Heart right ventricle (tissue), 16 donors: ENCODE measurements at regions of chr12 and their contacts with region 1.

Region 1: DNA sequence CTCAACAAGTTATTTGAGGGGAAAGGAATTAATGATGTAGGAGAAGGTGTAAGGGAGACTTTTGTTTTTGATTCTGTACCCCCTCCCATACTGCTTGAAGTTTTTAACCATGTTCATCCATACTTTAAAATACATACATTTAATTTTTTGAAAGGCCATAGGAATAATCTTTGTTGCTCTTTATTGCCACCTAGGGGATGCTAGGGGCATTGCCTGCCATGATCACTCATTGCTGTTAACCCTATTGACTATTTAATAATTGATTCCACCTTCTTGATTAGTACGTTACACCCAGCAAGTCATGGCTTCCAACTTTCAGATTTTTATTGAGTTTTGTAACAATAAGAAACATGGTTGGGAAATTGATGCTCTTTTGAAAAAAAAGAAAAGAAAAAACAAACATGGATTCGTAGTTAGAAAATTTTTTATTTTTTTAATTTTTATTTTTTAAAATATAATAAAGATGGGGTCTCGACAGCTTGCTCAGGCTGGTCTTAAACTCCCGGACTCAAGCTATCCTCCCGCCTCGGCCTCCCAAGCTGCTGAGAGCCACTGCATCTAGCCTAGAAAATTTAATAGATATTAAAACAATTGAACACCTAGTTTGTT is 8.5 kb upstream of the PRKAB1 start:
- DNase-seq: no peak
- ATAC-seq: no peak
- H3K4me3 ChIP-seq: no peak overlapping the region
- H3K27ac ChIP-seq: no peak overlapping the region
- H3K4me1 ChIP-seq: peaks cover 0 to 11% (median 0%) of the 10 kb centered on the region in 9 donors
- H3K27me3 ChIP-seq: no peaks in the 10 kb centered on the region
- CTCF ChIP-seq: peak; percentile 68 to 95 (median 88)

Region 2: DNA sequence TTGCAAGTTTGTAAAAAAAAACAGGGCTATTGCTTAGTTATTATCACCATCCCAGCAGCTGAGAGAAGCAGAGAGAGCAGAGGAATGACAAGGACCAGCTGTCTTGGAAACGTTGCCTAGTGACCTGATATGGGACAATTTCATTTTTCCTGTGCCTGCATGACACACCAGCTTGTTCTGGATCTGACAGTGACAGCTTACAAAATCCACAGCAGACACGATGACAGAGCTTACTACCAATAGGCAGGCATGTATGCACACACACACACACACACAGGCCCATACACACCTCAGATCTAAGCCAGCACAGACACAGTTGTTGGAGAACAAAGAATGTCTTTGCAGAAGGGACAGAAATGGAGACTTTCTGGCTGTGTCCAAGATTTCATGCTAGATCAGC is 455.3 kb before region 1 on chr12:
- intact Hi-C with region 1: no loop called
- DNase-seq: peak in 1 of 2 donors; percentile 76
- ATAC-seq: peak; percentile 59 to 80 (median 76)
- H3K4me3 ChIP-seq: no peak overlapping the region
- H3K27ac ChIP-seq: peak overlapping the region in 9 of 10 donors; percentile 25 to 83 (median 71)
- H3K4me1 ChIP-seq: peaks cover 5 to 75% (median 31%) of the 10 kb centered on the region in 9 donors
- H3K27me3 ChIP-seq: no peaks in the 10 kb centered on the region
- CTCF ChIP-seq: no peak

Region 3: GRCh38 chr12:119369907-119370546 is 289.4 kb before region 1 on chr12:
- intact Hi-C with region 1: no loop called
- DNase-seq: no peak
- ATAC-seq: no peak
- H3K4me3 ChIP-seq: no peak overlapping the region
- H3K27ac ChIP-seq: no peak overlapping the region
- H3K4me1 ChIP-seq: peaks cover 0 to 38% (median 15%) of the 10 kb centered on the region in 9 donors
- H3K27me3 ChIP-seq: no peaks in the 10 kb centered on the region
- CTCF ChIP-seq: no peak

Region 4: DNA sequence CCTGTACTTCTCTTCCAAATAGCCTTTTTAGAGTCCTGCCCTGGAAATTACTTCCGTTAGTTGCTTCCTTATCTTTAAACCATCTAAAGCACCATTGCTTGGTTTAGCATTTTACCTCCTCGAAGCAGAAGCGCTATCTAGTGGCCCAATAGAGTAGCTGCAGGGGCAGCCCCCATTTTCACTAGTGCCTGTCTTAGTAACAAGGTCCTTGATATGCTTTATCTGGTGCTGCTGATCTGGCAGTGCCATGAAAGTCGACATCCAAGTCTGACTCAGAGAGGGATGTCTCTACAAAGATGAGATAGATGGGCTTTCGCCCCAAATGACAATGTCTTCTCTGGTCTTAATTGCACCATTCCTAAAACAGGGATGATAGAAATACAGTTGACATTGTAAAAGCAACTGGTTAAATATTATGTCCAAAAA is 242.7 kb after region 1 on chr12:
- intact Hi-C with region 1: loop called in 1 of 10 experiments (anchors 10 kb)
- DNase-seq: peak; percentile 16 to 19
- ATAC-seq: peak in 1 of 8 donors; percentile 50
- H3K4me3 ChIP-seq: no peak overlapping the region
- H3K27ac ChIP-seq: no peak overlapping the region
- H3K4me1 ChIP-seq: peaks cover 0 to 5% (median 0%) of the 10 kb centered on the region in 9 donors
- H3K27me3 ChIP-seq: peaks cover 0 to 5% (median 0%) of the 10 kb centered on the region in 7 donors
- CTCF ChIP-seq: peak; percentile 40 to 88 (median 69)